ENCODE measurements at regions of chr9 and their contacts with region 1.

Region 1: DNA sequence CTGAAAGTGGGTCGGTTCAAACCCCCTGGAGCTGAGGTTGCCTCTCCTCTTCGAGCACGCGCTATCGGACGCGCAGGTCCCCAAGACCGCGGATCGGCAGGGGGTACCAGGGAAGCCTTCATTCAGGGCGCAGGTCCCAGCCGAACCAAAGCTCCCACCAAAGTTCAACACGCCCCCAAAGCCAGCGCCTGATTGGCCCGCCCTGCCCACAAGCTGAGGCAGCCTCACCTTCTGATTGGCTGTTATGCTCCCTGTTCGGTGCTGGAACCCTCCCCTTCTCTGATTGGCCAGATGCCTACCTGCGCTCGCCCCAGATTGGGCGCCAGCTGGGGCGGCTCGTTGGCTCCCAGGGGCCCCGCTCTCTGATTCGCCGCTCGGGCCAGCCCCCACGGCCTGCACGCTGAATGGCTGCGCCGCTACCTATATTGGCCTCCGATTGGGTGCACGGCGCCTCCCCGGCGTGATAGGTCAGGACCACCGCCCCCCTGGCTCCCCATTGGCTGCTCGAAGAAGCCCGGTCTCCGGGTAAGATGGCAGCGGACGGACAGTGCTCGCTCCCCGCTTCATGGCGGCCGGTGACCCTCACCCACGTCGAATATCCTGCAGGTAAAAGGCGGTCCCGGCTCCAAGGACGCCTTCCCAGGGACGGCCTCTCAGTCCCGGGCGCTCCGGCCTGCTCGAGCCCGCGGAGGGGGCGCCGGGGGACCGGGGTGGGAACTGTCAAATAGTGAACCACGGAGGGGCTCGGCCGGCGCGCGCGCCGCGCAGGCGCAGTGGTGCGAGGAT is at the start of gene DOLPP1:
- DNase-seq: peak; percentile 99
- H3K4me3 Mint-ChIP-seq: peak within 1 kb of the TSS; percentile 90
- H3K27ac Mint-ChIP-seq: peak within 1 kb of the TSS; percentile 63
- H3K4me1 Mint-ChIP-seq: peaks cover 16% of the 10 kb centered on the region
- H3K27me3 Mint-ChIP-seq: no peaks in the 10 kb centered on the region
- total RNA-seq, gene DOLPP1: 20.2 and 22.9 TPM in 2 replicates

Region 2: GRCh38 chr9:129036241-129036922 is 44.4 kb before region 1 on chr9 and contains the start of gene MIGA2:
- intact Hi-C with region 1: loop called (anchors 2 kb)
- DNase-seq: peak; percentile 94
- H3K4me3 Mint-ChIP-seq: peak within 1 kb of the TSS; percentile 94
- H3K27ac Mint-ChIP-seq: peak within 1 kb of the TSS; percentile 54
- H3K4me1 Mint-ChIP-seq: peaks cover 22% of the 10 kb centered on the region
- H3K27me3 Mint-ChIP-seq: no peaks in the 10 kb centered on the region
- total RNA-seq, gene MIGA2: 41.5 and 41.7 TPM in 2 replicates

Region 3: GRCh38 chr9:129110740-129111527 is 30.1 kb after region 1 on chr9 and contains the starts of genes CRAT and PTPA:
- intact Hi-C with region 1: loop called (anchors 1 kb)
- DNase-seq: peak; percentile 90
- H3K4me3 Mint-ChIP-seq: peak within 1 kb of the TSS; percentile 95
- H3K27ac Mint-ChIP-seq: peak within 1 kb of the TSS; percentile 96
- H3K4me1 Mint-ChIP-seq: peaks cover 21% of the 10 kb centered on the region
- H3K27me3 Mint-ChIP-seq: no peaks in the 10 kb centered on the region
- total RNA-seq, gene CRAT: 13.6 and 14.3 TPM in 2 replicates
- total RNA-seq, gene PTPA: 106 and 112 TPM in 2 replicates

Region 4: GRCh38 chr9:129166623-129167557 is 86.1 kb after region 1 on chr9:
- intact Hi-C with region 1: no loop called
- DNase-seq: no peak
- H3K4me3 Mint-ChIP-seq: peak overlapping the region; percentile 52
- H3K27ac Mint-ChIP-seq: peak overlapping the region; percentile 46
- H3K4me1 Mint-ChIP-seq: peaks cover 17% of the 10 kb centered on the region
- H3K27me3 Mint-ChIP-seq: no peaks in the 10 kb centered on the region

Measured in activated T-helper 2 cell treated with anti-CD3 and anti-CD28 coated beads, Interferon-gamma antibody, Interleukin-2, Interleukin-4, amounts not matched to agents 10 μg/mL and 5 μg/mL and 100 μg/mL, durations not matched to agents 14 hours and 24 hours and 36 hours (primary cell).